ENCODE measurements at regions of chr6 and their contacts with region 1.

Region 1: DNA sequence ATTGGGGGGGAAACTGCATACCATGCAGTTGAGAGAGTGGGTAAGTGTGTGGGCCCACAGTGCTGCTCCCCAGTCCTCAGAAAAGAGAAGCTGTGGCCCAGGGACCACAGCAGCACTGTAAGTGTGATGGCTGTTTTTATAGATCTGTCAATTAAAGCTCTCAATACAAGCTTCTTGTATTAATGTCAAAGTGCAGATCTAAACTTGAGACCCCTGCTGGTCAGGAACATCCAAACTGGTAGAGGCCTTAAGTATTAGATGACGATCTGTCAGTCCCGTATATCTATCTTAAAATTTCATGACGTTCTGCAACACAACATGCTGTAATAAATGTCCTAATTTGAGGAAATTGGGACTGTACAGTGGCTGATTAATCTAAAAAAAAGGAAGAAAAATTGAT is 74.8 kb downstream of the TULP4 start:
- DNase-seq: peak; percentile 54
- ATAC-seq: peak; percentile 43
- H3K4me3 ChIP-seq: no peak overlapping the region
- H3K4me3 Mint-ChIP-seq: no peak overlapping the region
- H3K27ac ChIP-seq: no peak overlapping the region
- H3K27ac Mint-ChIP-seq: no peak overlapping the region
- H3K4me1 ChIP-seq: no peaks in the 10 kb centered on the region
- H3K4me1 Mint-ChIP-seq: peaks cover 8% of the 10 kb centered on the region
- H3K27me3 ChIP-seq: no peaks in the 10 kb centered on the region
- H3K27me3 Mint-ChIP-seq: no peaks in the 10 kb centered on the region
- CTCF ChIP-seq: peak; percentile 45

Region 2: DNA sequence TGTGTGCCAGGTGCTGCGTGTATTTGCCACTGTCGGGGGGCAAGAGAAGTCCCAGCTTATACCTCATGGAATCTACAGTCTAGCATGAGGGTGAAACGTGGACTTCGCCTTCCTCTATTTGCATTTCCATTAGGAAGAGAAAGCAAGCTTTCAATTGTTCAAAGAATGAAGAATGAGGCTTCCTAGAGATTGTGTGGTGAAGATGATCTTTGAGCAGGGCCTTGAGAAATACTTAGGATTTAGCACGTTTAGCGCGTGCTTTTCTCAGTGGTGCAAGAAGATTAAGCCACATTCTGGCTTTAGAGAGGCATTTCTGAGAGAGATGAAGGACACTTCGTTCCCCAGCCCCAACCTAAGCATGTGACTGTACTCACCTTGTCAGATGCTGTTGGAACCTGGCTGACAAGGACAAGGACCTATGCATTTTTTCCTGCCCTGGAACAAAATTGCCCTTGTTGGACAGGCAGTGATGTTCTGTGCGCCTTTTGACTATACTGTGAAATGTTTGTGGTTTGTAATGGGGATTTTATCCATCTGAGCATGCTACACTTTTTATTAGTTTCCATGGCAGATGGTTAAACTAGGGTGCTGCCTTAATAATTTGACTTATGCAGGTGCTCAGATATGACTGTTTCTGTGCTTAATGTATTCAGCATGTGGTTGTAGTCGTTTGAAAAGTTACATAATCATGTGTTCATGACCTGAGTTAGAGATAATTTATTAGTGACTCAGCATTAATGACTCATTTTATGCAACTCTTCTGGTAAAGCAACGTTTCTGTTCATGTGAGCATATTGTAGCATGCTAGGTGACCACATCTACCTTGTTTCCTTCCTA is 64.1 kb before region 1 on chr6:
- CTCF ChIA-PET with region 1: no interaction called
- POLR2A ChIA-PET with region 1: no interaction called
- intact Hi-C with region 1: loop called (anchors 10 kb)
- DNase-seq: no peak
- ATAC-seq: no peak
- H3K4me3 ChIP-seq: no peak overlapping the region
- H3K4me3 Mint-ChIP-seq: peak overlapping the region; percentile 26
- H3K27ac ChIP-seq: no peak overlapping the region
- H3K27ac Mint-ChIP-seq: peak overlapping the region; percentile 16
- H3K4me1 ChIP-seq: peaks cover 57 to 62% of the 10 kb centered on the region in 2 donors
- H3K4me1 Mint-ChIP-seq: peaks cover 73% of the 10 kb centered on the region
- H3K27me3 ChIP-seq: no peaks in the 10 kb centered on the region
- H3K27me3 Mint-ChIP-seq: no peaks in the 10 kb centered on the region
- CTCF ChIP-seq: no peak

Region 3: GRCh38 chr6:158399040-158399700 is 12.1 kb after region 1 on chr6:
- CTCF ChIA-PET with region 1: interaction called, 14 read pairs
- POLR2A ChIA-PET with region 1: no interaction called
- intact Hi-C with region 1: no loop called
- DNase-seq: no peak
- ATAC-seq: no peak
- H3K4me3 ChIP-seq: no peak overlapping the region
- H3K4me3 Mint-ChIP-seq: no peak overlapping the region
- H3K27ac ChIP-seq: no peak overlapping the region
- H3K27ac Mint-ChIP-seq: no peak overlapping the region
- H3K4me1 ChIP-seq: no peaks in the 10 kb centered on the region
- H3K4me1 Mint-ChIP-seq: peaks cover 17% of the 10 kb centered on the region
- H3K27me3 ChIP-seq: no peaks in the 10 kb centered on the region
- H3K27me3 Mint-ChIP-seq: no peaks in the 10 kb centered on the region
- CTCF ChIP-seq: no peak

Region 4: DNA sequence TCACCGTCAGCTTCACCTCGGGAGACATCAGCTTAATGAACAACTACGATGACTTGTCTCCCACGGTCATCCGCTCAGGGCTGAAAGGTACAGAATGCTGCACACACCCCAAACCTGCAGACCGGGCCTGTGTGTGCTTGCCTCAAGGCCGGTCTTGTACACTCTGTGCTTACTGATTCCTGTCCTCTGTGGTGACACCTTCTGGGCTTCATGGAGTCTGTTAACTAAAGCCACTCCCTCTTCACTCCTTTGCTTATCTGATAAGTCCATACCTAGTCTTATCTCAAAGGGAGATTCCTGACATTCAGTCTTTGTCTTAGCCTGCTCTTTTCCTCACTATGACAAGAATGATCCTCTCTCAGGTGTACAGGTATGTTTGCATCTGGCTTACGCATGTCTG is 65.1 kb after region 1 on chr6:
- CTCF ChIA-PET with region 1: no interaction called
- POLR2A ChIA-PET with region 1: no interaction called
- intact Hi-C with region 1: no loop called
- DNase-seq: no peak
- ATAC-seq: no peak
- H3K4me3 ChIP-seq: no peak overlapping the region
- H3K4me3 Mint-ChIP-seq: no peak overlapping the region
- H3K27ac ChIP-seq: no peak overlapping the region
- H3K27ac Mint-ChIP-seq: no peak overlapping the region
- H3K4me1 ChIP-seq: no peaks in the 10 kb centered on the region
- H3K4me1 Mint-ChIP-seq: no peaks in the 10 kb centered on the region
- H3K27me3 ChIP-seq: no peaks in the 10 kb centered on the region
- H3K27me3 Mint-ChIP-seq: no peaks in the 10 kb centered on the region
- CTCF ChIP-seq: no peak